ENCODE measurements at regions of chr5 and their contacts with region 1.

Region 1: GRCh38 chr5:94181895-94182294 is 436.5 kb downstream of the KIAA0825 start:
- DNase-seq: peak; percentile 24
- ATAC-seq: peak; percentile 98
- H3K4me3 Mint-ChIP-seq: no peak overlapping the region
- H3K27ac Mint-ChIP-seq: 0 out of 2 replicates have a peak overlapping the region, but pooled peaks have one; percentile 17
- H3K4me1 Mint-ChIP-seq: peaks cover 32% of the 10 kb centered on the region
- H3K27me3 Mint-ChIP-seq: no peaks in the 10 kb centered on the region
- CTCF ChIP-seq: no peak

Region 2: GRCh38 chr5:94192658-94193391 is 10.9 kb after region 1 on chr5:
- CTCF ChIA-PET with region 1: interaction called, 20 read pairs
- POLR2A ChIA-PET with region 1: interaction called, 5 read pairs
- DNase-seq: no peak
- ATAC-seq: peak; percentile 75
- H3K4me3 Mint-ChIP-seq: no peak overlapping the region
- H3K27ac Mint-ChIP-seq: no peak overlapping the region; the same call in 1 of the 2 replicates
- H3K4me1 Mint-ChIP-seq: peaks cover 45% of the 10 kb centered on the region
- H3K27me3 Mint-ChIP-seq: no peaks in the 10 kb centered on the region
- CTCF ChIP-seq: no peak

Region 3: DNA sequence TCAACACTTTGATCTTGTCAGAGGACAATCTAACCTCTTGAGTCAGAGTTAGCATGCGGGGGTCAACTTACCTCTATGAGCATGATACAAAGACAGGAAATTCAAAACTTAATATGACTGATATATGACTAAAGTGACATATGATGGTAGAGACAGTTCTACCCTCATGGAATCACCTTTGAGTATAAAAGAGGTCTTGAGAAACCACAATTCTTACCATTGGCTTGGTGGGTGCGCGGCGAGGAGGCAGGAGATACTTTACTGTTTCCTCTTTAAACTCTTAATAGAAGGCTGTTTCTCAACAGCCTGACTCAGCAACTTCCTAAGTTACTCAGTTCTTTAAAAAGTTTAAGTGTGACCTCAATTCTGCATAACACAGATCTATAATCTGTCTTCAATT is 63.7 kb after region 1 on chr5:
- CTCF ChIA-PET with region 1: no interaction called
- POLR2A ChIA-PET with region 1: no interaction called
- DNase-seq: no peak
- ATAC-seq: no peak
- H3K4me3 Mint-ChIP-seq: no peak overlapping the region
- H3K27ac Mint-ChIP-seq: no peak overlapping the region
- H3K4me1 Mint-ChIP-seq: peaks cover 42% of the 10 kb centered on the region
- H3K27me3 Mint-ChIP-seq: no peaks in the 10 kb centered on the region
- CTCF ChIP-seq: no peak

Measured in WTC11 (cell line).